ENCODE measurements at regions of chr3 and their contacts with region 1.

Region 1: DNA sequence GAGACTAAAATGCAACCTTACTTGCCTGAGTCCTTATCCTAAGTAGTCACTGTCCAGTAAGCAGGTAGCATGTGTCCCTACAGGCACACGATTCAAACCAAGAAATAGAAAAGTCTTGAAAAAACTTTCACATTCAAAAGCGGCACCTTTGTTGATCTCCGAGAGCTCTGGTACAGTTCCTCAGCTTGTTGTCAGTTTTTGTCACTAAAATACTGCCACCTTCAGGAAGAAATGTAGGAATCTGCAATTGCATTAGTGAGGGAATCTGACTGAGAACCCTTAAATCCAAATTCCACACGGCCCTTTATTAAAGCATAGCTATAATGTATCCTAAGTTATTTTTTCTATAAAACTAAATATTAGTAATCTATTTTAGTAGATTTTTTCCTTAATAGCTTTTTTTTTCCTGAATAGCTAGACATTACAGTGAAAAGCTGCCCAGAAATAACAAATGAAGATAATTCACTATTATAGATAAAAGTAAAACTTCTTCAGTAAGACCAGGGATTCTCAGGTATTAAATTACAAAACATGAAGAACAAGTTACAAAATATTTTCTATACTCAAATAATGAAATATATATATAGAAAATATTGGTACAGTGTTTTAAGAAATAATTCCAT is 44.0 kb downstream of the CCDC54 start:
- DNase-seq: no peak
- ATAC-seq: peak; percentile 79
- H3K4me3 Mint-ChIP-seq: no peak overlapping the region
- H3K27ac Mint-ChIP-seq: no peak overlapping the region
- H3K4me1 Mint-ChIP-seq: peaks cover 3% of the 10 kb centered on the region
- H3K27me3 Mint-ChIP-seq: peaks cover 7% of the 10 kb centered on the region

Region 2: GRCh38 chr3:107409365-107409764 is 11.9 kb before region 1 on chr3:
- CTCF ChIA-PET with region 1: interaction called, 19 read pairs
- POLR2A ChIA-PET with region 1: no interaction called
- intact Hi-C with region 1: no loop called
- DNase-seq: no peak
- ATAC-seq: no peak
- H3K4me3 Mint-ChIP-seq: no peak overlapping the region
- H3K27ac Mint-ChIP-seq: no peak overlapping the region
- H3K4me1 Mint-ChIP-seq: peaks cover 6% of the 10 kb centered on the region
- H3K27me3 Mint-ChIP-seq: no peaks in the 10 kb centered on the region

Region 3: DNA sequence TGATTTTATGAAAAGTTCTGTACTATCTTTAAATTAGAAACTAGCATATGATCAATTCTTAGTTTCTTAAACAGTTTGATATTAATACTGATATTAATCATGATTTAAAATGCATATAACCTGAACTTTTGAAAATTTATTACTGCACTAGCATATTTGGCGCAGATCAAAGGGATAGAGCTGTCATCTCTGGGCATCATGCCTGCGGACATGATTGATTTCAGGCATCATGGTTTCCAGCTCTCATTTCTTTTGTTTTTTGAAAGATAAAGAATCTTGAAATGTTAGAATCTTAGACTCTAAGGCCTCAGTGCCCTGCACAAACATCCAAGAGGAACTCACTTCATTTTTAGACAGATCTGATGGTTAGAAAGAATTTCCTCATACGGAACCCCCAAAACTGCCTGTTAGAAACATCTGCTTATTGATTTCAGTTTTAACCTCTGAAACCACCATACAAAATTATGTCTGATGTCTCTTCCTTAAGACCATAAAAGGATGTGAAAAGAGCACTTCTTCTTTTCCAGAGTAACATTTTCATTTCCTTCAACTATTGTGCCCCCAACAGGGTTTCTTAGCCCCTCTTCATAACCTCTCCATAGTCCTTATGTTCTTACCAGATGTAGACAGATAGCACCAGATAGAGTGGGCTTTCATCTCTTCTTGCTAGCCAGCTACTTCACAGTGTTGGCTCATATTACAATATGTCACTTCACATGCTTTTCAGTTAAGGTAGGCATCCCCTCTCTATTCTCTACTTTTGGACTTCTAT is 212.2 kb after region 1 on chr3:
- CTCF ChIA-PET with region 1: no interaction called
- POLR2A ChIA-PET with region 1: interaction called, 13 read pairs
- intact Hi-C with region 1: no loop called
- DNase-seq: peak; percentile 21
- ATAC-seq: no peak
- H3K4me3 Mint-ChIP-seq: no peak overlapping the region
- H3K27ac Mint-ChIP-seq: peak overlapping the region; percentile 7
- H3K4me1 Mint-ChIP-seq: peaks cover 37% of the 10 kb centered on the region
- H3K27me3 Mint-ChIP-seq: no peaks in the 10 kb centered on the region

Measured in activated CD4-positive, alpha-beta T cell treated with anti-CD3 and anti-CD28 coated beads for 36 hours (primary cell).